Activated CD4-positive, alpha-beta memory T cell treated with anti-CD3 and anti-CD28 coated beads for 36 hours (primary cell): ENCODE measurements at regions of chr16 and their contacts with region 1.

Region 1: DNA sequence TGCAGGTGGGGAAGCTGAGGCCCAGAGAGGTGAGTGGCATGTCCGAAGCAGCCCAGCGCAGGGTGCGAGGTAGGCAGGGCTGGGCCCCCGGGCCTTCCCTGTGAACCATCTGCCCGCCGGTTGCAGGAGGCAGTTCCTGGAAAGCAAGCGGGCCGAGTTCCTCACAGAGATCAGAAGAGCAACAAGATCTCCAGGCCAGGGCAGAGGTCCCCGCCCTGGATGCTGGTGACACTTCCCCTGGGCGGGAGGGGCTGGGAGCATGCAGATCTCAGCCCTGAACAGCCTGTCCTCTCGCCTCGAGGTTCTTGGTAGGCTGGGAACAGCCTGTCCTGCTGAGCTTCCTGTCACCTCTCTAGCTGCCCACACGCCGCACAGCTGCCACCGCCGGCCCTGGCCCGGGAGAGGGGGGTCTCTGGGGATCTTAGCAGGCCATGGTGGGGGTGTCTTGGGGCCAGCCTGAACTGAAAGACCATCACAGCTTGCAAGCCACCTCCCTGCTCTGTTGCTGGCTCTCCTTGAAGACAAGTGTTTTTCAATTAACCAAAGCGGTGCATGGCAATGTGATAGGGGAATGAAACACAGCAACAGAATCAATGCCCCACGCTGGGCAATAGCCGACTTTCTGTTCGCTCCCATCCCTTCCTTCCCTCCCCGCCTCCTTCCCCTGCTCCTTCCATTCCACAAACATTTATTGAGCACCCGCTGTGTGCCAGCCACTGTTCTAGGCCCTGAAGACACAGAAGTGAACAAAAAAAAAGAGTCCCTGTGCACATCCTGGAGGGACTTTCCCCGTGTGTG is 31.7 kb downstream of the SOCS1 start:
- DNase-seq: peak; percentile 88
- H3K4me3 Mint-ChIP-seq: peak overlapping the region; percentile 71
- H3K27ac Mint-ChIP-seq: peak overlapping the region; percentile 99
- H3K4me1 Mint-ChIP-seq: peaks cover 56% of the 10 kb centered on the region
- H3K27me3 Mint-ChIP-seq: no peaks in the 10 kb centered on the region

Region 2: DNA sequence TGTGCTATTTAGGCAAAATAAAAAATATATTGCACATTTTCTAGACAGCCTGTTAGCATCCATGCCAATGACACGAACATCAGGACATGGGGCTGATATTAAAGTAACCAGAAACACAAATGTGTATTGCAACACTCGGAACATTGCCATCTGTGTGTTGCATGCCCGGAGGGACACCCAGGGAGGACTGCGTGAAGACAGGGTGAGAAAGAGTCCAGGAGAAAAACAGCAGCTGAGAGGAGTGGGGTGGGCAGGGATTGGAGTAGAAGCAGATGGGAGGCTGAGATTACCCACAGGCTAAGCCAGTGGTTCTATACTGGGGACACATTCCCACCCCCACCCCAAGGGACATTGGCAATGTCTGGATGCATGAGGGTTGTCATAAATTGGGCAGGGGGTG is 1156.9 kb before region 1 on chr16:
- CTCF ChIA-PET with region 1: no interaction called
- POLR2A ChIA-PET with region 1: no interaction called
- intact Hi-C with region 1: no loop called
- DNase-seq: no peak
- H3K4me3 Mint-ChIP-seq: no peak overlapping the region
- H3K27ac Mint-ChIP-seq: no peak overlapping the region
- H3K4me1 Mint-ChIP-seq: no peaks in the 10 kb centered on the region
- H3K27me3 Mint-ChIP-seq: peaks cover 2% of the 10 kb centered on the region

Region 3: DNA sequence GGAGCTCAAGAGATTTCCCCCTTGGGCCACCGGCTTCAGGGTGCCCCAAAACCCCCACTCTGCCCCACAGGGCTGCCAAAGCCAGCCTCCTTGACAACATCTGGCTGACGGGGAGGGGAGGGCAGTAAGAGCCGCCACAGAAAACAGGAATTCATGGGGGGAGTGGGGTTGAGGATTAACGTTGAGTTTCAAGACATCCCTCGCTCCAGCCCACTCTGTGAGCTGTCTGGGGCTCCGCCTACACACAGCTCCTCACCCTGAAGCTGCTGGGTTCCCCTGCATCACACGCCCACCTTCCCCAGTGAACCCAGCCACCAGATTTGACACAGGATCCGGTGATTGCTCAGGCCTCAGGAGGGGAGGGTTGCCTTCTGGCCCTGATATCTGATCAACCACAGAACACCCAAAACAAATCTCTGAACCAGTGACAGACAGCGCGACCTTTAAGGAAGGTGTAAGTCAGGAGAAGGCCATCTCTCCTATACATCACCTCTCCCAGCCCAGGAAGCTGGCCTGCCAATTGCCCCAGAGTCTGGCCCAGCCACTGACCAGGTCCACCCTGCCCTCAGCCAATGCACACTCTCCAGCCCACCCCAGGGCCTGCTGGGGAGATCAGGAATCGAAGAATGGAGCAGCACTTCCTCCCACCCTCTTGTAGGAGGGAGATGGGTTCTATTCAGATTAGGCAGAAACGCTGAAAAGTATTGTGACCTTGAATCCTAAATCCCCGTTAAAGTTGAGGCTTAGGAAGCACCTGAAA is 147.9 kb before region 1 on chr16:
- CTCF ChIA-PET with region 1: no interaction called
- POLR2A ChIA-PET with region 1: interaction called, 6 read pairs
- intact Hi-C with region 1: loop called (anchors 1 kb)
- DNase-seq: peak; percentile 88
- H3K4me3 Mint-ChIP-seq: no peak overlapping the region
- H3K27ac Mint-ChIP-seq: peak overlapping the region; percentile 94
- H3K4me1 Mint-ChIP-seq: peaks cover 96% of the 10 kb centered on the region
- H3K27me3 Mint-ChIP-seq: no peaks in the 10 kb centered on the region

Region 4: GRCh38 chr16:11105038-11105903 is 119.0 kb before region 1 on chr16:
- CTCF ChIA-PET with region 1: interaction called, 6 read pairs
- POLR2A ChIA-PET with region 1: interaction called, 19 read pairs
- intact Hi-C with region 1: loop called (anchors 1 kb)
- DNase-seq: peak; percentile 69
- H3K4me3 Mint-ChIP-seq: peak overlapping the region; percentile 56
- H3K27ac Mint-ChIP-seq: peak overlapping the region; percentile 97
- H3K4me1 Mint-ChIP-seq: peaks cover 72% of the 10 kb centered on the region
- H3K27me3 Mint-ChIP-seq: no peaks in the 10 kb centered on the region

Region 5: DNA sequence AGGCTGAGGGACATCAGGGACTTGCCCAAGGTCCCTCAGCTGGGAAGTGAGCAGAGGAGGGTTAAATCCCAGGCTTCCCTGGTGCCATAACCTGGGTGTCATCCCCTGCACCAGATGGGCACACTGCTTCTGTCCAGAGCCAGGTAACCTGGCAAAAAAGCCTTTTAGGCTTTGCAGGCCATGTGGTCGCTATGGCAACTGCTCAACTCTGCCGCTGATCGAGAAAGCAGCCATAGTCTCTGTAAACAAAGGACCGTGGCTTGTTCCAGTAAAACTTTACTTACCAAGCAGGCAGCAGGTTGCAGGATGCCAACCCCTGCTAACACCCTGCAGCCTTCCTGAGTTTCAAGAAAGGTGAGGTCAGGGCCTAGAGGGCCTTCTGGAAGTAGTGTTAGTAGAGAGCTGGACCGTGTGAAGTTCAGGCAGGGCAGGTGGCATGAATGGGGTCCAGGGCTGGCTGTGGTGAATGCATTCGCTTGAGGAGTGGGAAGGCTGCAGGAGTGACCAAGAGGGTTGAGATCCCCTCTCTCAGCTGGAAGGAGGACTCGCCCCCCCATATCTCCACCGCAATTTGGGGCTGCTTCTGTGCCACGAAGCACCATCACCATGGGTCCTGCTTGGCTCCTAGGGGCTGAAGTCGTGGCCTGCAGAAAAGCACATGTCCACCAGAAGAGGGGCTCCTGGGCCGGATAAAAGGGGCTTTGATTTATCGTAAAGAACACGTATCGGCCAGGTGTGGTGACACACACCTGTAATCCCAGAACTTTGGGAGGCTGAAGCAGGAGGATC is 59.6 kb before region 1 on chr16:
- CTCF ChIA-PET with region 1: interaction called, 11 read pairs
- POLR2A ChIA-PET with region 1: interaction called, 10 read pairs
- intact Hi-C with region 1: no loop called
- DNase-seq: no peak
- H3K4me3 Mint-ChIP-seq: no peak overlapping the region
- H3K27ac Mint-ChIP-seq: peak overlapping the region; percentile 24
- H3K4me1 Mint-ChIP-seq: peaks cover 26% of the 10 kb centered on the region
- H3K27me3 Mint-ChIP-seq: no peaks in the 10 kb centered on the region

Region 6: DNA sequence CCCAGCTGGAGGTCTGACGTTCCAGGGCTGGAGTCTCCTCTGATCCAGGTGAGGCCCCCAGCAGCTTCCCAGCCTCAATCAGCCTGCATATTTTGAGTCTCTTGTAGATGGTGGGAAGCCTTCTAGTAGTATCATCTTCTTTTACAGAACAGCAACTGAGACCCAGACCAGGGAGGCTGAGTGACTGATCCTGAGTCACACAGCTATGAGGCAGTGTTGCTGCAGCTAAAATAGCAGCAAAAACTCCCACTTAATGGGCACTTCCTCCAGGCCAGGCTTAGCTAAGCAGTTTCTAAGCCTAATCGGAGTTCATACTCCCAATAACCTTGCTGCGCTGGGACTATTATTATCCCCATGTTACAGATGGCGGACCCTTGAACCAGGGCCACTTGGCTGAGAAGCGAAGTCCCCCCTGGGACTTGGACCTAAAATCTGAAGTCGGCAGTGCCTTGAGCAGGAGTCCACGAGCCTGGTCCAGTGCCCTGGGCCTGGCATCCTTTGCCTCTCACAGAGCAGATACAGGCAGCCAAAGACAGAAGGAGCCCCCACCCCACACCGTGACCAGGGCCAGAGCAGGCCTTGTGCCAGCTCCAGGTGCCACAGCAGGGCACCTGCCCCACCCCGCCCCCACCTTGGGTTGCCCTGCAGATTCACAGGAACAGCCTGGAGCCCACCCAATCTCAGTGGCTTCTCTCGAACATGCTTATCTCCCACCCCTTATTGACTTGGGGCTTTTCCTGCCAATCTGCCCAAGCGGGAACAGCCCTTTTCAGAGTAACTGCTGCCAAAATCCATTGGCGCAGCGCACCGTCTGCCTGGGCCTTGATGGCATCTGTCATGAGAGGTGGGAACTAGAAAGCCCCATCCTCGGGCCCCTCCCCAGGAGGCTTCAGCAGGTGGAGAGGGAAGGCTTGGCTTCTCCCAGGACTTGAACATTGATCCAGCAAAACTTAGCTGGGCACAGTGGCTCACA is 33.4 kb before region 1 on chr16:
- CTCF ChIA-PET with region 1: no interaction called
- POLR2A ChIA-PET with region 1: interaction called, 3 read pairs
- intact Hi-C with region 1: loop called (anchors 2 kb)
- DNase-seq: peak; percentile 57
- H3K4me3 Mint-ChIP-seq: no peak overlapping the region
- H3K27ac Mint-ChIP-seq: peak overlapping the region; percentile 18
- H3K4me1 Mint-ChIP-seq: peaks cover 20% of the 10 kb centered on the region
- H3K27me3 Mint-ChIP-seq: no peaks in the 10 kb centered on the region

Region 7: DNA sequence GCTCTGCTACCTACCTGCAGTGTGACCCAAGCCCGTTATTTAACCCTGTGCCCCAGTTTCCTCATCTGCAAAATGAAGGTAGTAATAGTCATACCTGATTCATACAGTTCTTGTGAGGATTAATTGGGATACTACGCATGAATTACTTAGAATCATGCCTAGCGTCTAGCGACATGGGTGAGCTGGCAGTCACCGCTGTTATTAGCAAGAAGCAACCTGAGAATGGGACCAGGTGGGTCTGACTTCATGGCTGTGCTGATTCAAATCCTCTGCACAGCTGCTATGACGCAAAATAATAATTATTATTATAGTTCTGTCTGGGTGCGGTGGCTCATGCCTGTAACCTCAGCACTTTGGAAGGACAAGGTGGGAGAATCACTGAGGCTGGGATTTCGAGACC is 23.8 kb after region 1 on chr16:
- CTCF ChIA-PET with region 1: interaction called, 13 read pairs
- POLR2A ChIA-PET with region 1: interaction called, 129 read pairs
- intact Hi-C with region 1: loop called (anchors 1 kb)
- DNase-seq: peak; percentile 65
- H3K4me3 Mint-ChIP-seq: no peak overlapping the region
- H3K27ac Mint-ChIP-seq: peak overlapping the region; percentile 93
- H3K4me1 Mint-ChIP-seq: peaks cover 64% of the 10 kb centered on the region
- H3K27me3 Mint-ChIP-seq: peaks cover 2% of the 10 kb centered on the region